OCI-LY7 (cell line): ENCODE measurements at regions of chr7 and their contacts with region 1.

Region 1: DNA sequence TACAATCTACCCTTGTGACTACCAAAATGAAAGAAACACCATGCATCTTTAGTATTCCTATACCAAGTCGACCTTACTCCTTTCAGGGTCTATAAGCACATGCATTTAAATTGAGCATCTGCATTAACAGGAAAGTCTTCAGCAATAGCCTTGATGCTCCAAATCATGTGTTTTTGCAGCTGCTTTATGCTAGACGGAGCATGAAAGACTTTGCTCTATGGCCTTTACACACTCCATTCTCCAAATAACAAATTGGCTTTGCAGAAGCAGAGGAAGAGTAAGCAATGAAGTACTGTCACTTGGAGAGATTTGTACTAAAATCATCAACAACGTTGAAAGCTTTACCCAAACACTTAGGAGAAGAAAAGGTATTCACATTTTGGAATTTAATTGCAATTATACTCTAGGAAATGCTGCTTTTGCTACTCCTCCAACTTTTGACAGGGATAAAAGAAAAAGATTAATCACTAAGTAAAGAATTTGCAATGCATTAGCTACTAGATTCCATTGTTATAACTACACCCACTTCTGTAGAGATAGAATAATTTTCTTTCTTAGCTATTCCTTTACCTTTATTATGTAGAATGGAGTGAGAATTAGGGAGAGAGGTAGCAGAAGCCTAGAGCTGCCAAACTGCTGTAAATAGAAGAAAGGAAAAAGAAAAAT is 131.8 kb downstream of the SEMA3E start:
- DNase-seq: no peak
- H3K4me3 ChIP-seq: no peak overlapping the region
- H3K27ac ChIP-seq: no peak overlapping the region
- H3K4me1 ChIP-seq: no peaks in the 10 kb centered on the region
- CTCF ChIP-seq: no peak

Region 2: DNA sequence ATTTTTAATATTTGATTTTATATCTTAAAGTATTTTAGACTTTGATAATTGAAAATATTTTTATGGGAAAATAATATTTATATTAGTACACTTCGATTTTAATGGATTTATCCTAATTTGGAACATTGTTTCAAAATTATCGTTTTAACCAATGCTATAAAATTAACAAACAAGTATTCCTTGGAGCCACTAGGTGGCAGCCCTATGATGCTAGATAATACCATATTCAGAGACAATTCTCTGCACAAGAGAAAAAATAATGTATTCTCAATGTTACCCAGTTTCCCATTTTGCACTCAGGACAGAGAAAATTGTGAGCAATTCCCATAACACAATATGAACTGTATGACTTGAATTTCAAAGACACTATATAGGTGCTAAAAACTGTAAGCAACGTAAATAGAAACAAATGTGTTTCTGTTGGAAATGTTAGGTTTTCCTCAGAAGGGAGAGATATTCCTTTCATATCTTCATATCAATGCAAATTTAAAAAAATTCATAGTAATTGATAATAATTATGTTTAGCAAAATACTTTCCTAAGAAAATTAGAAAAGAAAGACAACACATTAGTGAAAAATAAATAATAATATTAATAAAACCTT is 106.1 kb before region 1 on chr7:
- CTCF ChIA-PET with region 1: no interaction called
- POLR2A ChIA-PET with region 1: interaction called, 5 read pairs
- intact Hi-C with region 1: loop called (anchors 2 kb)
- DNase-seq: peak; percentile 43
- H3K4me3 ChIP-seq: no peak overlapping the region
- H3K27ac ChIP-seq: no peak overlapping the region
- H3K4me1 ChIP-seq: no peaks in the 10 kb centered on the region
- CTCF ChIP-seq: peak; percentile 86

Region 3: DNA sequence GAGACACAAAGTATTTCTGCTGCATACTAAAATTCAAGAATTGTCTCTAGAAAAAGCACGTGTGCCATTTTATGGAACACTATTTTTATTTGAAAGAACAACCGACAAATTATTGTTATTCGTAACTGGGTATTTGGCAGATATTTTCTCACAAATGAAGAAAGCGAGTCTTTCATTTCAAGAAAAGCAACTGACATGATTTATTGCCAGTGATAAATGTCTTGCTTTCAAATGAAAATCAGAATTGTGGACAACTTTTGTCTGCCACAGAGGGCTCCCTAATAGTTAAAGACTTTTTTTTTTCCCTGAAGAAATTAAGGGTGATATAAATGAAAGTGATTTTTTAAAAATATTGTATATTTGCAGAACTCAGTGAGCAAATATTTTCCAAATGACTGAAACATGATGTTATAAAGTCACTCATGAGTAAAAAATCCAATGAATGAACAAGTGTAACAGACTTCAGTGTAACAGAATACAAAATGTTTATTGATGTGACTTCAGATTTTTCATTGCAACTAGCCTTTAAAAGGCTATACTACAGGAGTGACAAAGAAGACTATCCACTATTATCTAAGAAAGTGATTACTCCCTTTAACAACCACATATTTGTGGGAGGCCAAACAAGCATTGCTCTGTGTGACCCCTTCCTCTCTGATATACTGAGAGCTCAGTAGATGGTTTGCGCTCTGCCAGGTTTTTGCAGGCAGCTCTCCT is 180.8 kb after region 1 on chr7:
- CTCF ChIA-PET with region 1: no interaction called
- POLR2A ChIA-PET with region 1: no interaction called
- intact Hi-C with region 1: no loop called
- DNase-seq: no peak
- H3K4me3 ChIP-seq: no peak overlapping the region
- H3K27ac ChIP-seq: no peak overlapping the region
- H3K4me1 ChIP-seq: no peaks in the 10 kb centered on the region
- CTCF ChIP-seq: no peak